Activated CD4-positive, alpha-beta memory T cell treated with anti-CD3 and anti-CD28 coated beads for 36 hours (primary cell): ENCODE measurements at regions of chr10 and their contacts with region 1.

Region 1: DNA sequence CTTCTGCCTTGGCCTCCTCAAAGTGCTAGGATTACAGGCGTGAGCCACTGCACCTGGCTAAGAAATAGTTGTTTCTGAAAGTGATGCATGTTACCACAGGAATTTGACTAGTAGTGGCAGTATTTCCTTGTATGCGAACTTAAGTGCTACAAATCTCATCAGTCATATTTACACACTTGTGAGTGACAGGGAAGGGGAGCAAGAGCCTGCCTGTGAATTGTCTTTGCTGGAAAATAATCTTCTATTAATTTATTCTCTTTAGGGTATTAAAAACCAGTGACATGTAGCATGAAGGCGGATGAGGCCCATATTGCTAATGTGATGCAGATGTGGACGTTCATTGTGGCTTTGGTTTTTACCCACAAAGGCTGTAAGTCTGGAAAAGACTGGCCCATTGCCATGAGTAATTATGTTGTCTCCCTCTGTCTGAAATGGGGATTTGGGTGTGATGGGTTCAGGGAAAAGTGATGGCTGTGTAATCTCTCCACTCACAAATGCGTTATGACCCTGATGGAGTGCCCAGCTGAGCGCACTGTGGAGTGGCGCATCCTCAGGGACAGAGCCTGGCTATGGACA is 97.6 kb downstream of the CCNY start:
- DNase-seq: no peak
- H3K4me3 Mint-ChIP-seq: no peak overlapping the region
- H3K27ac Mint-ChIP-seq: no peak overlapping the region
- H3K4me1 Mint-ChIP-seq: peaks cover 32% of the 10 kb centered on the region
- H3K27me3 Mint-ChIP-seq: no peaks in the 10 kb centered on the region

Region 2: DNA sequence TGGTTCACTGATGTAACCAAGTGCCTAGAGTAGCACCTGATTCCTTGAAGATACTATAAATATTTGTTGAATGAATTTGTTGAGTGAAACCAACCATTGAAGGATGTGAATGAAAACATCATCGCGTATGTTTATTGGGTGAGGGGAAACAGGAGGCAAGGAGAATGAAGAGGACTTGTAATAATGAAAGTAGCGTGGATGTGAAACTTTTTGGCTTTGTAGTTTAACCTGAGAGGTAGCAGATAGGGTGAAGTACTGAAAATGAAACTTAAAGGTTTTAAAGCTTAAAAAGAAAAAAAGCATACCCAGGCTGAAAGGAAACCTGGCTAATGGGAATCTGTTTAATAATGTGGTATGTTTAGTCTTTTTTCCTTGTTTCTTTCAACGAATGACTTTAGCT is 92.4 kb before region 1 on chr10:
- CTCF ChIA-PET with region 1: no interaction called
- POLR2A ChIA-PET with region 1: no interaction called
- intact Hi-C with region 1: loop called (anchors 1 kb)
- DNase-seq: no peak
- H3K4me3 Mint-ChIP-seq: no peak overlapping the region
- H3K27ac Mint-ChIP-seq: peak overlapping the region; percentile 10
- H3K4me1 Mint-ChIP-seq: peaks cover 71% of the 10 kb centered on the region
- H3K27me3 Mint-ChIP-seq: no peaks in the 10 kb centered on the region

Region 3: GRCh38 chr10:35661236-35661635 is 227.3 kb after region 1 on chr10:
- CTCF ChIA-PET with region 1: no interaction called
- POLR2A ChIA-PET with region 1: no interaction called
- intact Hi-C with region 1: no loop called
- DNase-seq: no peak
- H3K4me3 Mint-ChIP-seq: no peak overlapping the region
- H3K27ac Mint-ChIP-seq: no peak overlapping the region
- H3K4me1 Mint-ChIP-seq: no peaks in the 10 kb centered on the region
- H3K27me3 Mint-ChIP-seq: peaks cover 13% of the 10 kb centered on the region